Psoas muscle (tissue), 8 donors: ENCODE measurements at regions of chr2 and their contacts with region 1.

Region 1: GRCh38 chr2:119826370-119826961 is 66.7 kb downstream of the PTPN4 start:
- DNase-seq: no peak
- ATAC-seq: peak in 2 of 4 donors; percentile 53 to 56
- H3K4me3 ChIP-seq: no peak overlapping the region
- H3K27ac ChIP-seq: no peak overlapping the region
- H3K4me1 ChIP-seq: peaks cover 16% of the 10 kb centered on the region
- H3K27me3 ChIP-seq: no peaks in the 10 kb centered on the region
- CTCF ChIP-seq: peak; percentile 28

Region 2: GRCh38 chr2:119531292-119531691 is 295.2 kb before region 1 on chr2:
- intact Hi-C with region 1: no loop called
- DNase-seq: no peak
- ATAC-seq: no peak
- H3K4me3 ChIP-seq: no peak overlapping the region
- H3K27ac ChIP-seq: no peak overlapping the region
- H3K4me1 ChIP-seq: no peaks in the 10 kb centered on the region
- H3K27me3 ChIP-seq: no peaks in the 10 kb centered on the region
- CTCF ChIP-seq: no peak

Region 3: DNA sequence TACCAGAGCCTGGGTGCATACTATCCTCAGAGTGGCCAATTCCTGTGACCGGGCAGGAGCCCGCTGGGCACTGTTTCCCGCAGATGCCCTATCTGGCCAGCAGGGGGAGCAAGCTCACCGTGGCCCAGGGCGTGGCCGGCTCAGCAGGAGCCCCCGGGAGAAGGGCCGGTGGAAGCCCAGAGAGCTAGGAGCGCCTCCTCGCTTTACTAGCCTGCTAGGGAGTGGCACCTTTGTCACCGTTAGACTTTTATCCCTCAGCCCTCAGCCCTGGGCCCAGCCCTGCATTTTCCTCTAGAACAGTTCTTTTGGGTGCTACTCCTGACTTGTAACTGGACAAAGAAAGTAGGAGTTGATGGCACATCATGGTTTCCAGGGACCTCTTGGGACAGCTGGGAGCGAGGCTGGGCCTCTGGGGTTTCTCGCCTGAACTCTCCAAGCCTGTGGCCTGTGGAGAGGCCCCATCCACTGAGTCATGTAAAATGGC is 123.5 kb before region 1 on chr2:
- intact Hi-C with region 1: loop called (anchors 1 to 5 kb)
- DNase-seq: peak; percentile 69 to 80
- ATAC-seq: peak; percentile 96 to 99 (median 96)
- H3K4me3 ChIP-seq: no peak overlapping the region
- H3K27ac ChIP-seq: no peak overlapping the region
- H3K4me1 ChIP-seq: no peaks in the 10 kb centered on the region
- H3K27me3 ChIP-seq: no peaks in the 10 kb centered on the region
- CTCF ChIP-seq: peak; percentile 96

Region 4: GRCh38 chr2:119753041-119753929 is 73.2 kb before region 1 on chr2:
- intact Hi-C with region 1: loop called (anchors 2 kb)
- DNase-seq: no peak
- ATAC-seq: peak; percentile 46 to 79 (median 55)
- H3K4me3 ChIP-seq: no peak overlapping the region
- H3K27ac ChIP-seq: peak overlapping the region; percentile 37
- H3K4me1 ChIP-seq: peaks cover 20% of the 10 kb centered on the region
- H3K27me3 ChIP-seq: no peaks in the 10 kb centered on the region
- CTCF ChIP-seq: peak; percentile 76

Region 5: DNA sequence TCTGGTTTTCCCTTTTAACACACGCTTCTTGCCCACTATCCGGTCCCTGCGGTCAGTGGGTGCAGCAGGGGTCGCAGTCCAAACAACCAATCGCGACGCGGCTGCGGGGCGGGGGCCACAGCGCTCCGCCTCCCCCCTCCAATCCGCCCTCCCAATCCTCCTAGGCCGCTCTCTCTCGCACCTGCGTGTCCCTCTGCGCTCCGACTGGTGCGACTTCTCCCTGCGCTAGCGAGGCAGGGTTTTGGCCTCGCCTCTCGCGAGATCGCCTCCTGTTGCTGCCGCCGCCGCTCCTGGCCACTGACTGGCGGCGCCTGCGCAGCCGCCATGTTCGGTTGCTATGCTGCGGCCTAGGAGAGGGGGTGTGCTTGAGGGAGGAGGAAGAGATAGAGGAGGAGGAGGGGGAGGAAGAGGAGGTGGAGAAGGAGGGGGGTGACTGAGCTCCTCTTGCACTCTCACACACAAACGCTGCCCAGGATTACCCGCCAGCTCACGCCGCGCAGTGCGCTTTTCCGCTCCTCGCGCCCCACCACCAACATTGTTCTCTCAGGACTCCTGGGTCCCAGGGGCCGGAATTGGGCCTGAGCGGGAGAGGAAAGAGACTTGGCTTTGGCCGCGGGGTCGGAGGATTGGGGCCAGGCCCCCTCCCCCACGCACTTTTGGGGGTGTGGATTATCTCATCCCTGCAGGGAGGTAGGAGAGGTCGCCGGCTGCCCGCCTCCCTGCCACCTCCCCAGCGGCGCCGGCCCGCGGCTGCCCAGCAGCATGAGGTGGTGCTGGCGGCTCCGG is 66.8 kb before region 1 on chr2 and contains the start of gene PTPN4:
- intact Hi-C with region 1: loop called in 1 of 2 experiments (anchors 2 kb)
- DNase-seq: peak; percentile 96 to 98
- ATAC-seq: peak; percentile 92 to 95 (median 93)
- H3K4me3 ChIP-seq: peak within 1 kb of the TSS; percentile 92
- H3K27ac ChIP-seq: peak within 1 kb of the TSS; percentile 92
- H3K4me1 ChIP-seq: peaks cover 45% of the 10 kb centered on the region
- H3K27me3 ChIP-seq: no peaks in the 10 kb centered on the region
- CTCF ChIP-seq: no peak
- total RNA-seq, gene PTPN4: 17.3 to 35.4 (median 29.2) TPM

Region 6: DNA sequence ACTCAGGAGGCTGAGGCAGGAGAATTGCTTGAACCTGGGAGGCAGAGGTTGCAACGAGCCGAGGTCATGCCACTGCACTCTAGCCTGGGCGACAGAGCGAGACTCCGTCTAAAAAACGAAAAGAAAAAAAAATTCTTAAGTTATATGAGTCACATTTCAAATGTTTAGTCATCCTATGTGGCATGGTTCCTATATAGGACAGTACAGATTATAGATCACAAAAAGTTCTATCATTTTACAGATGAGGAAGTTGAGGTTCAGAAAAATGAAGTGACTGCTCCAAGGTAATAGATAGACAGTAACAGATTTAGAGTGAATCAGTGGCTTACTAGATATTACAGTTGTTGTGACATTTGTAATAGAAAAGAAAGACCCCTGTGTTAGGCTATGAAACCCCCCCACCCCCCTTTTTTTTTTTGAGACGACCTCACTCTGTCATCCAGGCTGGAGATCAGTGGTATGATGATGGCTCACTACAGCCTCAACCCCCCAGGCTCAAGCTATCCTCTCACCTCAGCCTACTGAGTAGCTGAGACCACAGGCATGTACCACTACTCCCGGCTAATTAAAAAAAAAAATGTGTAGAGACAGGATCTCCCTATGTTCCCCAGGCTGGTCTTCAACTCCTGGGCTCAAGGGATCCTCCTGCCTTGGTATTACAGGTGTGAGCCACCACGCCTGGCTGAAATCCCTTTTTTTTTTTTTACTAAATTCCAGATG is 44.0 kb before region 1 on chr2:
- intact Hi-C with region 1: loop called in 1 of 2 experiments (anchors 5 kb)
- DNase-seq: no peak
- ATAC-seq: no peak
- H3K4me3 ChIP-seq: no peak overlapping the region
- H3K27ac ChIP-seq: no peak overlapping the region
- H3K4me1 ChIP-seq: peaks cover 29% of the 10 kb centered on the region
- H3K27me3 ChIP-seq: no peaks in the 10 kb centered on the region
- CTCF ChIP-seq: no peak